K562 (cell line): ENCODE measurements at regions of chr15 and their contacts with region 1.

Region 1: DNA sequence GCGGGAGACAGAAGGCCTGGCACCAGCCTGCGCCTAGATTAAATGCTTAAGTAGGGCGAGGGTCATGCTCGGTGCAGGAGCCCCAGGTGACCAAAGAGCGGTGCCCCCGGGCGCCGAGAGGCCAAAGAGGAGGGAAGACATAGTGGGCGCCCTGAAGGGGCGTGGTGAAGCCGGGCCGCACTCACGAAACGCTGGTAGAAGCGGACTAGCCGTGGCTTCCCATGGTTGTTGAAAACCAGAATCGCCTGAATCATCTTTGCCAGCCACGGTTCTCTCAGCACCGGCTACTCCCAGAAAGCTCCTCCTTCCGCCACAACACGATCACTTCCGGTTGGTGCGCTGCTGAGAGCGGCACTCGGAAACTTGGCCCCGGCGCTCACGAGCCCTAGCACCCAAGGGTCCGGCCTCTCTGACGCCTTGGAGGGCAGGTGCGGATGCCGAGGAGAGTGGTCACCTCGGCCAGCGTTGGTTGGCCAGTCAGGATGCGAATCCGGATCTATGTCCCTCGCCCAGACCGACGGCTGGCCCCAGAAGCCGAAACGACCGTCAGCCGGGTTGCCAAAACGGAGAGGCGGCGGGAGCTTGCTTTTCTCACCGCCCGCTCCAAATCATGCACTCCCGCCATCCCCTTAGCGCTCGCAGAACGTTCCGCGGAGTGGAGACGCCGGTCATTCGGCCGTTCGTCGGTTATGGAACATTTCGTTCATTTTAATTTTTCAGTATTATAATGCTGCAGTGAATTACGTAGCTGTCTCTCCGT is at the start of gene AP3S2:
- DNase-seq: peak; percentile 83 to 96 (median 86)
- ATAC-seq: peak; percentile 94
- H3K4me3 ChIP-seq: peak within 1 kb of the TSS; percentile 78
- H3K27ac ChIP-seq: peak within 1 kb of the TSS; percentile 86
- H3K4me1 ChIP-seq: peaks cover 2 to 6% of the 10 kb centered on the region in 2 experiments; a peak in 2 of 5 replicates
- H3K27me3 ChIP-seq: no peaks in the 10 kb centered on the region
- CTCF ChIP-seq: no peak
- EP300 ChIP-seq: no peak
- POLR2A ChIP-seq: peak; percentile 89
- RAD21 ChIP-seq: peak; percentile 16 to 24; a peak in 3 of 4 replicates
- polyA plus RNA-seq, gene AP3S2: 16.4 to 20.1 TPM

Region 2: GRCh38 chr15:89587952-89588351 is 305.9 kb before region 1 on chr15:
- CTCF ChIA-PET with region 1: no interaction called
- POLR2A ChIA-PET with region 1: no interaction called
- in situ Hi-C with region 1: no loop called
- intact Hi-C with region 1: no loop called
- DNase-seq: no peak
- ATAC-seq: no peak
- H3K4me3 ChIP-seq: no peak overlapping the region
- H3K27ac ChIP-seq: no peak overlapping the region
- H3K4me1 ChIP-seq: no peaks in the 10 kb centered on the region
- H3K27me3 ChIP-seq: no peaks in the 10 kb centered on the region
- CTCF ChIP-seq: no peak
- EP300 ChIP-seq: no peak
- POLR2A ChIP-seq: no peak
- RAD21 ChIP-seq: no peak

Region 3: GRCh38 chr15:89760303-89761008 is 133.4 kb before region 1 on chr15:
- CTCF ChIA-PET with region 1: interaction called, 9 read pairs
- POLR2A ChIA-PET with region 1: interaction called, 7 read pairs
- in situ Hi-C with region 1: no loop called
- intact Hi-C with region 1: loop called (anchors 5 kb)
- DNase-seq: peak; percentile 87 to 90 (median 90)
- ATAC-seq: peak; percentile 99
- H3K4me3 ChIP-seq: no peak overlapping the region
- H3K27ac ChIP-seq: peak overlapping the region; percentile 58
- H3K4me1 ChIP-seq: peaks cover 13 to 26% of the 10 kb centered on the region in 2 experiments
- H3K27me3 ChIP-seq: no peaks in the 10 kb centered on the region
- CTCF ChIP-seq: peak; percentile 96 to 98 (median 97)
- EP300 ChIP-seq: no peak
- POLR2A ChIP-seq: no peak
- RAD21 ChIP-seq: peak; percentile 91 to 95

Region 4: GRCh38 chr15:89971592-89971997 is 77.7 kb after region 1 on chr15:
- CTCF ChIA-PET with region 1: interaction called, 4 read pairs
- POLR2A ChIA-PET with region 1: interaction called, 3 read pairs
- in situ Hi-C with region 1: no loop called
- intact Hi-C with region 1: loop called (anchors 1 kb)
- DNase-seq: peak; percentile 50 to 78 (median 65)
- ATAC-seq: peak; percentile 100
- H3K4me3 ChIP-seq: no peak overlapping the region
- H3K27ac ChIP-seq: no peak overlapping the region
- H3K4me1 ChIP-seq: no peaks in the 10 kb centered on the region
- H3K27me3 ChIP-seq: no peaks in the 10 kb centered on the region
- CTCF ChIP-seq: peak; percentile 90 to 99 (median 98)
- EP300 ChIP-seq: no peak
- POLR2A ChIP-seq: no peak
- RAD21 ChIP-seq: peak; percentile 54 to 76

Region 5: DNA sequence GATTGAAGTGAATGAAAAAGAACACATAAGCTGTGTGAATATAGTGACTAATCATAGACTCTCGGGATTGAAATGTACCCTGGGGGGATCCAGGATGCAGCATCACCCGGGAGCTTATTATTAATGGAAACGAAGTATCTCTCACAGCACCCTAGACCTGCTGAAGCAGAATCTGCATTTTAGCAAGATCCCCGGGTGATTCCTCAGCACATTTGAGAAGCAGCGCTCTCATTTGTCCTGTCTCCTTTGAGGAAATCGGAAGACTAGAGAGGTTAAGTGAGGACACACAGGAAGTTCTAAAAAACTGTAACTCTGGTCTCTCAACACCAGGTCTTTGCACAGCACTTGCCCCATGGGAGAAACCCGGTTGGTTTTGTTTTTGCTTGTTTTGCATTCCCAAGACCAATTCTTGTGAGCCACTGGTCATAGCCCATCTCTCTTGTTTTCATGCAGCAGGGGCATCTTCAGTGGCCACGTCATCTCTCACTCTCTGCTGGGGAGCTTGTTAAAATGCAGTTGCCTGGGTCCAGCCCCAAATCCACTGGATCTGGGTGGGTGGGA is 137.4 kb after region 1 on chr15:
- CTCF ChIA-PET with region 1: no interaction called
- POLR2A ChIA-PET with region 1: no interaction called
- in situ Hi-C with region 1: no loop called
- intact Hi-C with region 1: no loop called
- DNase-seq: no peak
- ATAC-seq: no peak
- H3K4me3 ChIP-seq: no peak overlapping the region
- H3K27ac ChIP-seq: no peak overlapping the region
- H3K4me1 ChIP-seq: peaks cover 19 to 26% of the 10 kb centered on the region in 2 experiments
- H3K27me3 ChIP-seq: no peaks in the 10 kb centered on the region
- CTCF ChIP-seq: no peak
- EP300 ChIP-seq: no peak
- POLR2A ChIP-seq: no peak
- RAD21 ChIP-seq: no peak

Region 6: DNA sequence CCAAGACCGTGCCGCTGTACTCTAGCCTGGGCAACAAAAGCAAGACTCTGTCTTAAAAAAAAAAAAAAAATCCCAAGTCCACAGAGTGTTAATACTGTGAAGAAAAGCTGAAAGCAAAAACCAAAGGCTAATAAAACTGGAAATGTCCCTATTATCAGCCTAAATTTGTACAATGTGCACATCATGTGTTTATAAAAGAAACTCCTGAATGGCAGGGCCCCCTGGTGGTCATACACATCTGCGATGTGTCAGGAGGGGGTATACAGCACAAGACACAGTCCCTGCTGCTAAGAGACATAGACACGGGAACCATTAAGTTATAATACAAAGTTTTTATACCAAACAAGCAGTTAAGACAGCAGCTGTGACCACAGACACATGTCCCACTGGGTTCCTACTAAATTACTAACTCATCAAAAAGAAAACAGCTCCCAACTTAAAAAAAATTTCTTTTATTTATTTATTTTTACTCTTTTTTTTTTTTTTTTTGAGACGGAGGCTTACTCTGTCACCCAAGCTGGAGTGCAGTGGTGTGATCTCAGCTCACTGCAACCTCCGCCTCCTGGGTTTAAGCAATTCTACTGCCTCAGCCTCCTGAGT is 177.4 kb after region 1 on chr15:
- CTCF ChIA-PET with region 1: interaction called, 31 read pairs
- POLR2A ChIA-PET with region 1: interaction called, 4 read pairs
- in situ Hi-C with region 1: no loop called
- intact Hi-C with region 1: loop called (anchors 1 kb)
- DNase-seq: peak; percentile 73 to 87 (median 76)
- ATAC-seq: peak; percentile 94
- H3K4me3 ChIP-seq: no peak overlapping the region
- H3K27ac ChIP-seq: no peak overlapping the region
- H3K4me1 ChIP-seq: peaks cover 0 to 17% of the 10 kb centered on the region in 2 experiments; a peak in 1 of 5 replicates
- H3K27me3 ChIP-seq: no peaks in the 10 kb centered on the region
- CTCF ChIP-seq: peak; percentile 86 to 89 (median 87)
- EP300 ChIP-seq: no peak
- POLR2A ChIP-seq: no peak
- RAD21 ChIP-seq: peak; percentile 90 to 94

Region 7: GRCh38 chr15:90086868-90087268 is 193.0 kb after region 1 on chr15:
- CTCF ChIA-PET with region 1: interaction called, 19 read pairs
- POLR2A ChIA-PET with region 1: interaction called, 3 read pairs
- in situ Hi-C with region 1: loop called (anchors 5 kb)
- intact Hi-C with region 1: loop called (anchors 1 kb)
- DNase-seq: peak; percentile 67 to 74 (median 72)
- ATAC-seq: peak; percentile 87
- H3K4me3 ChIP-seq: no peak overlapping the region
- H3K27ac ChIP-seq: no peak overlapping the region
- H3K4me1 ChIP-seq: peaks cover 0 to 17% of the 10 kb centered on the region in 2 experiments; a peak in 2 of 5 replicates
- H3K27me3 ChIP-seq: no peaks in the 10 kb centered on the region
- CTCF ChIP-seq: peak; percentile 83 to 88 (median 86)
- EP300 ChIP-seq: no peak
- POLR2A ChIP-seq: no peak
- RAD21 ChIP-seq: peak; percentile 61 to 83